Activated B cell treated with CpG ODN at 0.5 μM for 24 hours (primary cell): ENCODE measurements at regions of chr12 and their contacts with region 1.

Region 1: GRCh38 chr12:54958048-54958658 is 26.4 kb downstream of the TESPA1 start:
- DNase-seq: no peak
- ATAC-seq: no peak
- H3K4me3 Mint-ChIP-seq: no peak overlapping the region
- H3K27ac Mint-ChIP-seq: no peak overlapping the region
- H3K4me1 Mint-ChIP-seq: peaks cover 27% of the 10 kb centered on the region
- H3K27me3 Mint-ChIP-seq: no peaks in the 10 kb centered on the region
- CTCF ChIP-seq: no peak

Region 2: GRCh38 chr12:54304187-54304810 is 653.9 kb before region 1 on chr12:
- CTCF ChIA-PET with region 1: no interaction called
- POLR2A ChIA-PET with region 1: no interaction called
- intact Hi-C with region 1: no loop called
- DNase-seq: peak; percentile 54
- ATAC-seq: peak; percentile 94
- H3K4me3 Mint-ChIP-seq: peak overlapping the region; percentile 69
- H3K27ac Mint-ChIP-seq: no peak overlapping the region
- H3K4me1 Mint-ChIP-seq: peaks cover 36% of the 10 kb centered on the region
- H3K27me3 Mint-ChIP-seq: peaks cover 37% of the 10 kb centered on the region
- CTCF ChIP-seq: no peak

Region 3: GRCh38 chr12:54603173-54603814 is 354.9 kb before region 1 on chr12:
- CTCF ChIA-PET with region 1: no interaction called
- POLR2A ChIA-PET with region 1: no interaction called
- intact Hi-C with region 1: loop called (anchors 5 kb)
- DNase-seq: no peak
- ATAC-seq: peak; percentile 85
- H3K4me3 Mint-ChIP-seq: no peak overlapping the region
- H3K27ac Mint-ChIP-seq: no peak overlapping the region
- H3K4me1 Mint-ChIP-seq: peaks cover 2% of the 10 kb centered on the region
- H3K27me3 Mint-ChIP-seq: peaks cover 7% of the 10 kb centered on the region
- CTCF ChIP-seq: peak; percentile 71

Region 4: DNA sequence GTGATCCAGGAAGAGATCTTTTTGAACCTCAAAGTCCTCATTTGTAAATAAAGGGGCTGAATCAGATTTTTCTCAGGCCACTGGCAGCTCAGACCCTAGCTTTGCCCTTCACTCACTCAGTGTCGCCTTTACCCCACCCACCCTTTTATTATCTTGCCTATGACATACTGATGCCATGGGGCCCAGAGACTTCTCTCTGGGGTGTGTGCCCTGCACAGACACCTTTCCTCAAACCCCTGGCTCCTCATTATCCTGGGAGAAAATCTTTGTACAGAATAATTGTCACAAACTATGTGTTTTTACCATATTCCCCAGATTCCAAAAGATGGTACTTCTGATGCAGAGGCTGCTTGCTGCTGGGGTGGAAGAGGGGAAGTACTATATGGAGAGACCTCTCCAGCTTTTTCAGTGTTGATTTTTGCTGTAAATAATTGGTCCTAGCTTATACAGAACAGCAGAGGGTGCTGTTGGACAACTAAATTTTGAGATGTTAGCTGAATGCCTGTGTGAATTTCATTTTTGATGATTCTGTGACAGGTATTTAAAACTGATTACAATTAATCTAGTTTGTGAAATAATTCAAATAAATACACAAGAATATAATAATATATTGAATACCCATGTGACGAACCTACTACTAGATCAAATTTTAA is 256.1 kb before region 1 on chr12:
- CTCF ChIA-PET with region 1: interaction called, 14 read pairs
- POLR2A ChIA-PET with region 1: no interaction called
- intact Hi-C with region 1: loop called (anchors 1 kb)
- DNase-seq: no peak
- ATAC-seq: no peak
- H3K4me3 Mint-ChIP-seq: no peak overlapping the region
- H3K27ac Mint-ChIP-seq: no peak overlapping the region
- H3K4me1 Mint-ChIP-seq: no peaks in the 10 kb centered on the region
- H3K27me3 Mint-ChIP-seq: peaks cover 8% of the 10 kb centered on the region
- CTCF ChIP-seq: no peak

Region 5: DNA sequence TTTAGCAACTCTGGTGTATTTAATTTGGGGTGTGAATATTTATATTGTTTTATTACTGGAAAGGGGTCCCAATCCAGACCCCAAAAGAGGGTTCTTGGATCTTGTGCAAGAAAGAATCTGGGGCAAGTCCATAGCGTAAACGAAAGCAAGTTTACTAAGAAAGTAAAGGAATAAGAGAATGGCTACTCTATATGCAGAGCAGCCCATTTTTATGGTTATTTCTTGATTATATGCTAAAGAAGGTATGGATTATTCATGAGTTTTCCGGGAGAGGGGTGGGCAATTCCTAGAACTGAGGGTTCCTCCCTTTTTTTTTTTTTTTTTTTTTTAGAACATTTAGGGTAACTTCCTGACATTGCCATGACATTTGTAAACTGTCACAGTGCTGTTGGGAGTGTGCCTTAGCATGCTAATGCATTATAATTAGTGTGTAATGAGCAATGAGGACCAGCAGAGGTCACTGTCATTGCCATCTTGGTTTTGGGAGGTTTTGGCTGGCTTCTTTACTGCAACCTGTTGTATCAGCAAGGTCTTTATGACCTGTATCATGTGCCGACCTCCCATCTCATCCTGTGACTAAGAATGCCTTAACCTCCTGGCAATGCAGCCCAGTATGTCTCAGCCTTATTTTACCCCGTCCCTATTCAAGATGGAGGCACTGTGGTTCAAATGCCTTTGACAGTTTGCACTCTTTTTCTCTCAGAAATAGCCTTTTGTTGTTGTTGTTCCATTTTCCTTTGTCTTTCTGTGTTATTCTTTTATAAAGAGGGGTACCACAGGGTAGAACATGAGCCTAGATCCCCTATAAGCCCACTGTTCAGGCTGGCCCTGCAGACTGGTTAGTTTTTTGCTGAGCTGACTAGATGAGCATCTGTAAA is 234.5 kb before region 1 on chr12:
- CTCF ChIA-PET with region 1: interaction called, 4 read pairs
- POLR2A ChIA-PET with region 1: no interaction called
- intact Hi-C with region 1: loop called (anchors 1 kb)
- DNase-seq: no peak
- ATAC-seq: peak; percentile 34
- H3K4me3 Mint-ChIP-seq: no peak overlapping the region
- H3K27ac Mint-ChIP-seq: no peak overlapping the region
- H3K4me1 Mint-ChIP-seq: peaks cover 3% of the 10 kb centered on the region
- H3K27me3 Mint-ChIP-seq: peaks cover 18% of the 10 kb centered on the region
- CTCF ChIP-seq: peak; percentile 14

Region 6: GRCh38 chr12:54749191-54749818 is 208.8 kb before region 1 on chr12:
- CTCF ChIA-PET with region 1: interaction called, 32 read pairs
- POLR2A ChIA-PET with region 1: no interaction called
- intact Hi-C with region 1: loop called (anchors 1 kb)
- DNase-seq: no peak
- ATAC-seq: peak; percentile 54
- H3K4me3 Mint-ChIP-seq: no peak overlapping the region
- H3K27ac Mint-ChIP-seq: no peak overlapping the region
- H3K4me1 Mint-ChIP-seq: peaks cover 3% of the 10 kb centered on the region
- H3K27me3 Mint-ChIP-seq: peaks cover 2% of the 10 kb centered on the region
- CTCF ChIP-seq: peak; percentile 75

Region 7: GRCh38 chr12:54853995-54854566 is 104.1 kb before region 1 on chr12 and contains the start of gene MUCL1:
- CTCF ChIA-PET with region 1: interaction called, 7 read pairs
- POLR2A ChIA-PET with region 1: no interaction called
- intact Hi-C with region 1: loop called (anchors 1 kb)
- DNase-seq: no peak
- ATAC-seq: peak; percentile 92
- H3K4me3 Mint-ChIP-seq: no peak within 1 kb of the TSS
- H3K27ac Mint-ChIP-seq: no peak within 1 kb of the TSS
- H3K4me1 Mint-ChIP-seq: no peaks in the 10 kb centered on the region
- H3K27me3 Mint-ChIP-seq: peaks cover 10% of the 10 kb centered on the region
- CTCF ChIP-seq: peak; percentile 77
- total RNA-seq, gene MUCL1: not detected in 2 replicates

Region 8: DNA sequence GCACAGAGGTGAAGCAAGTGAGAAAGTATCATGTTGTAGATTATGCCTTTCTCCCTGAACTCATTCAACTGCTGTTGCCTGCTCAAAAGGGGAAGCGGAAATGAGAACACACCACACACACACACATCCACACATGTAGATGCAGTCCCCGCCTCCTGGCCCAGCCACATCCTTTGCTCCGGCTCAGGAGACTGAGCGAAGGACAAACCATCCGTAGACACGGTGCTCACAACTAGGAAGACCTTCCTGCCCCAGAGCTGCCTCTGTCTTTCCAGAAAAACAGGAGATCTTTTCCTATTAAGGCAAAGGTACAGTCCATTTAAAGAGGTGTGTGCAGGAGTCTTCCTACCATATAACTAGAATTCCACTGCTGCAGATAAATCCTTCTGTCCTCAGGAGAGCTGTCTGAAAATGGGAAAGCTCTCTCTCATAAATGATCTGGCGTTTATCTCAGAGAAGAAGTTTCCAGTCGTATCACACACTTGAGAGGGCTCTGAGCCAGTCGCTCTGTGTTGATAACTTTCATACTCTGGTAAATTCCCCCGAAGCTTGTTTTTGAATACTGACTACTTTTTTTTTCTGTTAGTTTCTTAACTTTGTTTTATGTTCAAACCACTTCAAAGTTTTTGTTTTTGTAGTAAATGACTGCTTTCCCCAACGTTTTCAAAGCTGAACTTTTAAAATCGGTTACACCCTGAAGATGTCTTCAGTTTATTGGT is 26.7 kb after region 1 on chr12 and contains the start of gene TESPA1:
- CTCF ChIA-PET with region 1: interaction called, 3 read pairs
- POLR2A ChIA-PET with region 1: no interaction called
- intact Hi-C with region 1: loop called (anchors 2 kb)
- DNase-seq: peak; percentile 62
- ATAC-seq: peak; percentile 97
- H3K4me3 Mint-ChIP-seq: peak within 1 kb of the TSS; percentile 89
- H3K27ac Mint-ChIP-seq: peak within 1 kb of the TSS; percentile 97
- H3K4me1 Mint-ChIP-seq: peaks cover 80% of the 10 kb centered on the region
- H3K27me3 Mint-ChIP-seq: no peaks in the 10 kb centered on the region
- CTCF ChIP-seq: no peak
- total RNA-seq, gene TESPA1: 31.5 and 35.5 TPM in 2 replicates